ENCODE measurements at regions of chr14 and their contacts with region 1.

Region 1: GRCh38 chr14:73491256-73492042 is 716 bp downstream of the RIOX1 start:
- DNase-seq: peak; percentile 74
- ATAC-seq: peak; percentile 81
- H3K4me3 ChIP-seq: peak overlapping the region; percentile 79
- H3K27ac ChIP-seq: peak overlapping the region; percentile 27; the same call in 1 of the 2 replicates
- H3K4me1 ChIP-seq: peaks cover 26% of the 10 kb centered on the region
- H3K27me3 ChIP-seq: no peaks in the 10 kb centered on the region
- CTCF ChIP-seq: no peak

Region 2: GRCh38 chr14:73458151-73458976 is 33.1 kb before region 1 on chr14 and contains the start of gene NUMB:
- CTCF ChIA-PET with region 1: no interaction called
- POLR2A ChIA-PET with region 1: no interaction called
- intact Hi-C with region 1: loop called (anchors 1 kb)
- DNase-seq: peak; percentile 100
- ATAC-seq: peak; percentile 94
- H3K4me3 ChIP-seq: peak within 1 kb of the TSS; percentile 90
- H3K27ac ChIP-seq: peak within 1 kb of the TSS; percentile 11; the same call in 1 of the 2 replicates
- H3K4me1 ChIP-seq: peaks cover 37% of the 10 kb centered on the region
- H3K27me3 ChIP-seq: no peaks in the 10 kb centered on the region
- CTCF ChIP-seq: no peak
- total RNA-seq, gene NUMB: 22.2 and 26.8 TPM in 2 replicates

Region 3: DNA sequence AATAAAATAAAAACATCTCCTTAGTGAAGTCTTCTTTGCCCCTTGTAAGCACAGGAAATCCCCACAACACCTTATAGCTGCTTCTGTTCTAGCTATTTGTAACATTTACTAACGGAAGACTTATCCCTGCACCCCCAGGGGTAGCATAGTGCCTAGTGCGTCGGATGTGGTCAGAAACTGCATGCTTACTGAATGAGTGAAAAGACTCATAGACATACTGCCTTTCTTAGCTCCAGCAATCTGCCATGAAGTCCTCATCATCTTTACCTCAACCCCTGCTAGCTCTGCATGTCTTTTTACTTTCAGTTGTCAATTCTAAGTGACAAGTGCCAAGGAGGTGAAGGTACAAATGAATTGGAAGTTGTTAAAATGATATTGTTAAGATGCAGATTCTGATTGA is 12.2 kb after region 1 on chr14:
- CTCF ChIA-PET with region 1: no interaction called
- POLR2A ChIA-PET with region 1: interaction called, 14 read pairs
- intact Hi-C with region 1: no loop called
- DNase-seq: no peak
- ATAC-seq: no peak
- H3K4me3 ChIP-seq: no peak overlapping the region
- H3K27ac ChIP-seq: no peak overlapping the region
- H3K4me1 ChIP-seq: no peaks in the 10 kb centered on the region
- H3K27me3 ChIP-seq: no peaks in the 10 kb centered on the region
- CTCF ChIP-seq: no peak

Region 4: GRCh38 chr14:73613046-73613383 is 121.6 kb after region 1 on chr14:
- CTCF ChIA-PET with region 1: no interaction called
- POLR2A ChIA-PET with region 1: no interaction called
- intact Hi-C with region 1: loop called (anchors 5 kb)
- DNase-seq: no peak
- ATAC-seq: peak; percentile 31
- H3K4me3 ChIP-seq: peak overlapping the region; percentile 83
- H3K27ac ChIP-seq: no peak overlapping the region; the same call in 1 of the 2 replicates
- H3K4me1 ChIP-seq: peaks cover 13% of the 10 kb centered on the region
- H3K27me3 ChIP-seq: no peaks in the 10 kb centered on the region
- CTCF ChIP-seq: no peak